ENCODE measurements at regions of chr12 and their contacts with region 1.

Region 1: GRCh38 chr12:103462675-103463074 is 33.1 kb downstream of the C12orf42 start:
- DNase-seq: peak; percentile 11
- ATAC-seq: peak; percentile 80
- H3K4me3 ChIP-seq: no peak overlapping the region
- H3K4me3 Mint-ChIP-seq: peak overlapping the region; percentile 26
- H3K27ac ChIP-seq: no peak overlapping the region
- H3K27ac Mint-ChIP-seq: no peak overlapping the region
- H3K4me1 ChIP-seq: peaks cover 6 to 10% of the 10 kb centered on the region in 2 donors
- H3K4me1 Mint-ChIP-seq: peaks cover 23% of the 10 kb centered on the region
- H3K27me3 ChIP-seq: no peaks in the 10 kb centered on the region
- H3K27me3 Mint-ChIP-seq: no peaks in the 10 kb centered on the region
- CTCF ChIP-seq: no peak

Region 2: DNA sequence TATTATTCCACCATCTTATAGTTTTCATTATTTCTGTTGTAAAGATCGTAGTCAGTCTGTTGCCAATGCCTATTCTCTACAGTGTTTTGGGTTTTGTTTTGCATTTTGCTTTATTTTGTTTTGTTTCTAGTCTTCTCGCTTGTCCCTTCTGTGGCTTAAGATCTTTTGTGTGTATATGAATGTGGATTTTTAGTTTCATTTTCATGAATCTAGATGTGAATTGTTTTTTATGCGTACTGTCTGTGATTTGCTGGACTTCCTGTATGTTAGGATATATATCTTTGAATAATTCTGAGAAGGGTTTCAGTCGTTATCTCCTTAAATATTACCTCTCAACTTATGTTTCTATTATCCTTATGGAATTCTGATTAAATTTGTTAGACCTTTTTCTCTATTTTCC is 19.7 kb after region 1 on chr12:
- CTCF ChIA-PET with region 1: no interaction called
- POLR2A ChIA-PET with region 1: no interaction called
- intact Hi-C with region 1: loop called (anchors 2 kb)
- DNase-seq: no peak
- ATAC-seq: no peak
- H3K4me3 ChIP-seq: peak overlapping the region in 1 of 5 experiments; percentile 16
- H3K4me3 Mint-ChIP-seq: peak overlapping the region; percentile 14
- H3K27ac ChIP-seq: no peak overlapping the region
- H3K27ac Mint-ChIP-seq: no peak overlapping the region
- H3K4me1 ChIP-seq: no peaks in the 10 kb centered on the region
- H3K4me1 Mint-ChIP-seq: peaks cover 3% of the 10 kb centered on the region
- H3K27me3 ChIP-seq: no peaks in the 10 kb centered on the region
- H3K27me3 Mint-ChIP-seq: no peaks in the 10 kb centered on the region
- CTCF ChIP-seq: no peak